ENCODE measurements at regions of chr11 and their contacts with region 1.

Region 1: DNA sequence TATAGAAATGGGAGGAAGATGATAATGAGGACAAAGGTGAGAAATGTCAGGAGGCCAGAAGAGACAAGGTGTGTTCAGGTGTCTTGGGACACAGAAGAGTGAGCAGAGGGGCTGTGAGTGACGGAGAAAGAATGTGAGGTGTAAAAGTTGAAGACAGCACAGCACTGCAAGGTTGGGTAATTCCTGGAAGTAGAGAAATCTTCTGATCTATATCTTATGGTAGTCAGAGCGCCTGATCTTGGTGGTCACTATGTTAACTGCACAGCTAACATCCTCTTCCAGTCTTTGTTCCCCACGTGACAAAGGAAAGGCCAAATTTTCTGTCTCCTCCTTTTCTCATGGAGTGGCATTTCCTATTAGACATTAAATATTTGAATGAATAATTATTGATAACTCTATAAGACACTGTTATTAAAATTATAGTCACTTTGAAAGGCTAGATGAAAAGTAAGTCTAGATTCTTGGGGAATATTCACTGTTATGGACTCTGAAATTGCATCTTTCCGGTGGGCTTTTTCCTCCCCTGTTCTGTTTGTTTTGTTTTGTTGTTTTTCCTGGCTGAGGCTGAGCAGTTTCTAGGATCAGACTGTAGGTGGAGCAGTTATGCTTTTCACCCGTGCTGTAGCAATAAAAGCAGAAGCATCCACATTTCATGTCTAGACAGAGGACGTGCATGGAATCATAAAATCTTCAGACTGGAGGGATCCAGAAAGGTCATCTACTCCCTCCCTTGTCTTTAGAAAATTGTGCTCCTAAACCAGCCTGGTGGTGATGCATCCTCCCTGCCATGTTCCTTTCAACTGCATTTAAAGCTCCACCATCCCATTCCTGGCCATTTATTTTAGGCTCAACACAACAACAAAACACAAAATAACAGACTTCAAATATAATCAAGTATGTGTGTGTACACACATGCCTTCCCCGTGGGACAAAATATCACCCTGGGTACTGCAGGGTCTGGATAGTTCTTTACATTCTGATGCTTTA is 26.6 kb downstream of the SC5D start:
- DNase-seq: peak in 7 of 14 experiments; percentile 10 to 73 (median 44)
- ATAC-seq: peak; percentile 85
- H3K4me3 ChIP-seq: no peak overlapping the region
- H3K4me3 Mint-ChIP-seq: no peak overlapping the region
- H3K27ac ChIP-seq: no peak overlapping the region
- H3K27ac Mint-ChIP-seq: no peak overlapping the region
- H3K4me1 ChIP-seq: peaks cover 6% of the 10 kb centered on the region
- H3K4me1 Mint-ChIP-seq: peaks cover 22% of the 10 kb centered on the region
- H3K27me3 ChIP-seq: no peaks in the 10 kb centered on the region
- H3K27me3 Mint-ChIP-seq: no peaks in the 10 kb centered on the region
- CTCF ChIP-seq: peak; percentile 86

Region 2: GRCh38 chr11:121282886-121283502 is 36.1 kb before region 1 on chr11:
- CTCF ChIA-PET with region 1: no interaction called
- POLR2A ChIA-PET with region 1: no interaction called
- intact Hi-C with region 1: no loop called
- DNase-seq: no peak
- ATAC-seq: no peak
- H3K4me3 ChIP-seq: no peak overlapping the region
- H3K4me3 Mint-ChIP-seq: no peak overlapping the region
- H3K27ac ChIP-seq: no peak overlapping the region
- H3K27ac Mint-ChIP-seq: no peak overlapping the region
- H3K4me1 ChIP-seq: no peaks in the 10 kb centered on the region
- H3K4me1 Mint-ChIP-seq: no peaks in the 10 kb centered on the region
- H3K27me3 ChIP-seq: peaks cover 2 to 9% of the 10 kb centered on the region in 2 experiments
- H3K27me3 Mint-ChIP-seq: peaks cover 40% of the 10 kb centered on the region
- CTCF ChIP-seq: no peak

Region 3: DNA sequence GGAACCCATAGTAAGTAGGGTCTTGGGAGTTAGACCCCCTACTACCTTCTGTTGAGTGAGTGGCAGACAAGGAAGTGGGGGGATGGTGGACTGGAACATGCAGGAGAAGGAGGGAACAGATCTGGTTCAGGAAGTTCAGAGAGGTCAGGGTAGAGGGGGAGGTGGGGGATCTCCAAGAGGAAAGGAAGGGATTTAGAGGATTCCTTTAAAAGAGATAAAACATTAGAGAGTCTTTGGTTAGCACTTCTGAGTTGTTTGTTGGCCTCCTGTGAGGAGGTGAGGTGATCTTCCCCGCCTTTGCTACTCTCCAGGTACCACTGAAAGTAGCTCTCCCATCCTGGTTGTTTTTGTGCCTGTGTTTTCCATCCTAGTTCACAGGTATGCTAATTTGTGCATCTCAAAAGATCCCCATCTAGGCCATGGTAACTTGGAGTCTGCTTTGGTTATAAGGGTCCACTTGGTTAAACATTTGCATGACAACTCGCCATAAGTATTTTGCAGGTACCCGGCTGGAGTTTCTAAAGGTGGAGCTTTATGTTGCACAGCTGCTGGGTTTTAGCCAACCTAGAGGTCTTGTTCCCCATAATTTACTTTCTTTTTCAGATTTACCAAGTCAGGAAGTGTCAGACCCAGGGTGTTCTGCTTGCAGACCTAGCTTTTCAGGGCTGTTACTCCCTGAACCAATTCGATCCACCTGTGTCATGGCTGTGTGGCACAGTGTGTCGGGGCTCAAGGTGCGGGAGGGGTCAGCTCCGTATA is 53.7 kb after region 1 on chr11:
- CTCF ChIA-PET with region 1: no interaction called
- POLR2A ChIA-PET with region 1: no interaction called
- intact Hi-C with region 1: loop called in 1 of 2 experiments (anchors 10 kb)
- DNase-seq: peak in 4 of 14 experiments; percentile 31 to 38 (median 34)
- ATAC-seq: no peak
- H3K4me3 ChIP-seq: peak overlapping the region; percentile 3
- H3K4me3 Mint-ChIP-seq: peak overlapping the region; percentile 25
- H3K27ac ChIP-seq: peak overlapping the region in 1 of 2 donors; percentile 41
- H3K27ac Mint-ChIP-seq: peak overlapping the region; percentile 65
- H3K4me1 ChIP-seq: peaks cover 45% of the 10 kb centered on the region
- H3K4me1 Mint-ChIP-seq: peaks cover 77% of the 10 kb centered on the region
- H3K27me3 ChIP-seq: no peaks in the 10 kb centered on the region
- H3K27me3 Mint-ChIP-seq: no peaks in the 10 kb centered on the region
- CTCF ChIP-seq: no peak

Region 4: GRCh38 chr11:121426476-121427399 is 107.6 kb after region 1 on chr11:
- CTCF ChIA-PET with region 1: interaction called, 3 read pairs
- POLR2A ChIA-PET with region 1: no interaction called
- intact Hi-C with region 1: loop called in 1 of 2 experiments (anchors 10 kb)
- DNase-seq: peak in 13 of 14 experiments; percentile 9 to 72 (median 48)
- ATAC-seq: peak; percentile 70
- H3K4me3 ChIP-seq: peak overlapping the region; percentile 43
- H3K4me3 Mint-ChIP-seq: peak overlapping the region; percentile 83
- H3K27ac ChIP-seq: no peak overlapping the region
- H3K27ac Mint-ChIP-seq: peak overlapping the region; percentile 29
- H3K4me1 ChIP-seq: peaks cover 27% of the 10 kb centered on the region
- H3K4me1 Mint-ChIP-seq: peaks cover 59% of the 10 kb centered on the region
- H3K27me3 ChIP-seq: no peaks in the 10 kb centered on the region
- H3K27me3 Mint-ChIP-seq: no peaks in the 10 kb centered on the region
- CTCF ChIP-seq: no peak

Region 5: DNA sequence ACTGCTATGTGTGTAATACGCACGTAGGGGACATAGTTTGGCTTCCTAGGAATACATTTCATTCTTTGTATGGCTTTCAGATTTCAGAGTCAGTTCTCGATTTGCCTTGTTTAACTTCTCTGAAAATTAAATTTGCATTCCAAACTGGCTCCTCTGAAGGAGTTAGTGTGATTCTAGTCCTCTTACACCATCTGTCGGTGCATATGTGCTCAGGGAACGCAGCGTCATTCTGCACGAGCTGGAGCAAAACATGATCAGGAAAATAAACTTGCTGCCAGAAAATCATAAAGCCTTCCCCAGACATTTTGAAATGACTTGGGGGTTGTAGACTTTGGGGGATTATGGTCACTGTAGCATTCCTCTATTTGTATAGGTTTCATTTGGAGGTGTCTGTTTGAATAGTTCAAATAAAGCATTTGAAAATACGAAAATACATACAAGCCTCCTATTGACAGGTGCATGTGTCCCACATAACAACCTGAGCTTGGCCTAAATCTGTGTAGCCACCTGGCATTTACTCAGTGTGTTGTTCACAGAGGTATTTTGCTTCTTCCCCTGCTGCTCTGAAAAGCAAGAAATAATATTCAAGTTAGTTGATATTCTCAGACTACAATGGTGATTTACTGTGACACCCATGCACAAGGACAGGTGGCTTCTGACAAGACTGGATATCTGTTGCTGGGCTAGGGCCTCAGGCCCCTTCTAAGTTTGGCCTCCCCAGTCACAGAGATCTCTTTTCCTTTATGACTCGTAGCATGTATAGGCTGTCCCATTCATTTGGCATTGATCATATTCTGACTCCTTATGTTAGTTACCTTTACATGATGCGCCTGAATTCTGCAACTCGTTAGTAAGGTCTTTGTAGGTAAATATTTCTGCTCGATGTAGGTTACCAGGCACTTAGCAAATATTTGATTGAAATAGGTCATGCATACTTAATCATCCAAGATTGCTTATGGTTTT is 215.3 kb after region 1 on chr11:
- CTCF ChIA-PET with region 1: no interaction called
- POLR2A ChIA-PET with region 1: no interaction called
- intact Hi-C with region 1: loop called in 1 of 2 experiments (anchors 2 kb)
- DNase-seq: no peak
- ATAC-seq: no peak
- H3K4me3 ChIP-seq: no peak overlapping the region
- H3K4me3 Mint-ChIP-seq: no peak overlapping the region
- H3K27ac ChIP-seq: peak overlapping the region in 1 of 2 donors; percentile 1
- H3K27ac Mint-ChIP-seq: peak overlapping the region; percentile 53
- H3K4me1 ChIP-seq: no peaks in the 10 kb centered on the region
- H3K4me1 Mint-ChIP-seq: peaks cover 64% of the 10 kb centered on the region
- H3K27me3 ChIP-seq: no peaks in the 10 kb centered on the region
- H3K27me3 Mint-ChIP-seq: no peaks in the 10 kb centered on the region
- CTCF ChIP-seq: no peak

Region 6: GRCh38 chr11:121591405-121592033 is 272.4 kb after region 1 on chr11:
- CTCF ChIA-PET with region 1: interaction called, 16 read pairs
- POLR2A ChIA-PET with region 1: interaction called, 7 read pairs
- intact Hi-C with region 1: loop called (anchors 1 kb)
- DNase-seq: peak; percentile 42 to 88 (median 62)
- ATAC-seq: peak; percentile 91
- H3K4me3 ChIP-seq: no peak overlapping the region
- H3K4me3 Mint-ChIP-seq: no peak overlapping the region
- H3K27ac ChIP-seq: no peak overlapping the region
- H3K27ac Mint-ChIP-seq: peak overlapping the region; percentile 71
- H3K4me1 ChIP-seq: peaks cover 5% of the 10 kb centered on the region
- H3K4me1 Mint-ChIP-seq: peaks cover 10% of the 10 kb centered on the region
- H3K27me3 ChIP-seq: no peaks in the 10 kb centered on the region
- H3K27me3 Mint-ChIP-seq: no peaks in the 10 kb centered on the region
- CTCF ChIP-seq: peak; percentile 84

Measured in CD4-positive, alpha-beta T cell (primary cell).